Activated T-helper 1 cell treated with anti-CD3 and anti-CD28 coated beads, Interleukin-12 subunit alpha, Interleukin-12 subunit beta, Interleukin-2, Interleukin-4 antibody, amounts not matched to agents 30 ng/mL and 10 ng/mL and 1 ng/mL, durations not matched to agents 14 hours and 24 hours and 36 hours (primary cell): ENCODE measurements at regions of chr6 and their contacts with region 1.

Region 1: DNA sequence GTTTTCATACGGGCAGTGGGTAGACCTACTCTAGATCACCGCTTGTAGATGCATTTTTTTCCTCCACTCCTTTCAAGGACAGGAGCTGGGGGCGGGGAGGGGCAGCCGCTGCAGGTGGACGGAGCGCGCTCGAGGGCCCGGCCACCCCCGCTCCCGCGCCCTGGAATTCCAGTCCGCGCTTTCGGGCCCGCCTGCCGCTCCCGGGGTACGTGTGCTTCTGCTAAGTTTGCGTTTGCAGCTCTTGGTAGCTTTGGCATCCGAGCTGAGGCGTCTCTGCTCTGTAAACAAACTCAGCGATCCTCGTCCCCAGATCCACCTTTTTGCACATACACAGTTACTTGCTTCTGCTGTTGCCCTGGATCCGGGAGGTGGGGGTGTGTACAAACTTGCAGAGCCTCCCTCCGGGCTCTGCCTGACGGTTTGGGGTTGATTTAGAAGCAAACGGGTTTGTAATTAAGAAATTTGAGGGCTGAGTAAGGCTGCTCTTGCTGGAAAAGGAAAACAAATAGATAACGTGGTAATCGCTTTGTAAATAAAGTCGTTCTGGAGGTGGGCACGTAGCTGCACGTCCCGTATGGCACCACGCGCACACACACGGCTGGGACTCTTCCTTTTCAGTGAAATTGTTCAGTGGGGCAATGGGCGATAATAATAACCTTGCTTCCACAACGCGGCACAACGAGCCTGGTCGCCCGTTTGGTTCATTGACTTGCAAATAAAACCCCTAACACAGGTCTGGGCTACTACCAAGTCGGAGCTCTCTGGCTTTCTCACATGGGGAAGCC is 976 bp upstream of the CITED2 start:
- DNase-seq: peak; percentile 81
- H3K4me3 Mint-ChIP-seq: peak overlapping the region; percentile 87
- H3K27ac Mint-ChIP-seq: peak overlapping the region; percentile 98
- H3K4me1 Mint-ChIP-seq: peaks cover 31% of the 10 kb centered on the region
- H3K27me3 Mint-ChIP-seq: no peaks in the 10 kb centered on the region

Region 2: GRCh38 chr6:139124887-139125672 is 250.3 kb before region 1 on chr6:
- intact Hi-C with region 1: loop called (anchors 1 kb)
- DNase-seq: peak; percentile 77
- H3K4me3 Mint-ChIP-seq: peak overlapping the region; percentile 47
- H3K27ac Mint-ChIP-seq: peak overlapping the region; percentile 92
- H3K4me1 Mint-ChIP-seq: peaks cover 33% of the 10 kb centered on the region
- H3K27me3 Mint-ChIP-seq: no peaks in the 10 kb centered on the region

Region 3: GRCh38 chr6:139457476-139457875 is 82.1 kb after region 1 on chr6:
- intact Hi-C with region 1: no loop called
- DNase-seq: no peak
- H3K4me3 Mint-ChIP-seq: no peak overlapping the region
- H3K27ac Mint-ChIP-seq: no peak overlapping the region
- H3K4me1 Mint-ChIP-seq: no peaks in the 10 kb centered on the region
- H3K27me3 Mint-ChIP-seq: peaks cover 4% of the 10 kb centered on the region

Region 4: GRCh38 chr6:139531109-139531790 is 155.8 kb after region 1 on chr6:
- intact Hi-C with region 1: loop called (anchors 2 kb)
- DNase-seq: no peak
- H3K4me3 Mint-ChIP-seq: peak overlapping the region; percentile 2
- H3K27ac Mint-ChIP-seq: peak overlapping the region; percentile 32
- H3K4me1 Mint-ChIP-seq: peaks cover 55% of the 10 kb centered on the region
- H3K27me3 Mint-ChIP-seq: no peaks in the 10 kb centered on the region

Region 5: DNA sequence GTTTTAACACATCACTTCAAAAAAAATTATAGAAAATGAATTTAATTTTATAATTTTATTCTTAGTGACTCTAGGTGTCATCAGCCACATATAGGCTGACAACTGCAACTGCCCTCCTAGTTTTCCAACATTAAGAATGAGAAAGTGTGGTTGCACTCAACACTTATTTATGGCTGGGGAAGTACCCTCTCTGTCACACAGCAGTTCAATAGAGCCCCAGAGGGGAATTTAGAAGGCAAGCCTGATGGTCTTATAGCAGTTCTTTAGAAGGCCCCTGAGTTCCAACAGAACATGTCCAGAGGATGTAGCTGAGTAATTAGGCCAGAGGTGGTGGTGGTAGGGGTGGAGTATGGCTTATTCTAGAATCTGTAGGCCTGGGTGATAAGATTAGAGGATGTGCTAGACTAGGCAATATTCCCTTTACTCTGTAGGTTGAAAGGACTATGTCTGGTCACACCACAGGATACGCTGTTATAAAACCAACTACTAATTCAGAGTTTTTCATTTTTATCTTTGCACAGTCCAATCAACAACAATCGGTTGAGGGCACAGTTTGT is 225.6 kb after region 1 on chr6:
- intact Hi-C with region 1: loop called (anchors 2 kb)
- DNase-seq: no peak
- H3K4me3 Mint-ChIP-seq: no peak overlapping the region
- H3K27ac Mint-ChIP-seq: peak overlapping the region; percentile 10
- H3K4me1 Mint-ChIP-seq: peaks cover 7% of the 10 kb centered on the region
- H3K27me3 Mint-ChIP-seq: no peaks in the 10 kb centered on the region

Region 6: GRCh38 chr6:139927236-139927635 is 551.8 kb after region 1 on chr6:
- intact Hi-C with region 1: loop called (anchors 10 kb)
- DNase-seq: no peak
- H3K4me3 Mint-ChIP-seq: no peak overlapping the region
- H3K27ac Mint-ChIP-seq: no peak overlapping the region
- H3K4me1 Mint-ChIP-seq: no peaks in the 10 kb centered on the region
- H3K27me3 Mint-ChIP-seq: peaks cover 2% of the 10 kb centered on the region

Region 7: DNA sequence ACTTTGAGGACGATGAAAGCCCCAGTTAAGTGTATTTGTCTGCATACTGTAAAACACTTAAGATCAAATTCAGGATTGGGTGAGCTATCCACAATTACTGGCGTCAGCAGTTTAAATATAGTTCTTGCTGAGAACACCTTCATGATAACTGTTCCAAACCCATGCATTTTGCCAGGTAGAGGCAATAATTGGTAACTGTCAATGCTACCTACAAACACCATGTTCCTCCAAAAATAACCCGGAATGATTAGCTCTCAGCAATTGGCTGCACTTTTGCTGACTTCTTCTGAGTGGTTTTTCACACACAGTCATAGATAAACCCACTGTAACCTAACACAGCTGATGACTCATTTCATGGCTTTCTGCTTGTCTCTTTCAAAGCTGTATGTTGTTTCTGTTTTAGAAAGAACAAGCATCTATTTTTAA is 1398.7 kb after region 1 on chr6:
- intact Hi-C with region 1: loop called (anchors 1 kb)
- DNase-seq: peak; percentile 6
- H3K4me3 Mint-ChIP-seq: no peak overlapping the region
- H3K27ac Mint-ChIP-seq: no peak overlapping the region
- H3K4me1 Mint-ChIP-seq: peaks cover 23% of the 10 kb centered on the region
- H3K27me3 Mint-ChIP-seq: peaks cover 7% of the 10 kb centered on the region